Ovary (tissue), 10 donors: ENCODE measurements at regions of chr17 and their contacts with region 1.

Region 1: DNA sequence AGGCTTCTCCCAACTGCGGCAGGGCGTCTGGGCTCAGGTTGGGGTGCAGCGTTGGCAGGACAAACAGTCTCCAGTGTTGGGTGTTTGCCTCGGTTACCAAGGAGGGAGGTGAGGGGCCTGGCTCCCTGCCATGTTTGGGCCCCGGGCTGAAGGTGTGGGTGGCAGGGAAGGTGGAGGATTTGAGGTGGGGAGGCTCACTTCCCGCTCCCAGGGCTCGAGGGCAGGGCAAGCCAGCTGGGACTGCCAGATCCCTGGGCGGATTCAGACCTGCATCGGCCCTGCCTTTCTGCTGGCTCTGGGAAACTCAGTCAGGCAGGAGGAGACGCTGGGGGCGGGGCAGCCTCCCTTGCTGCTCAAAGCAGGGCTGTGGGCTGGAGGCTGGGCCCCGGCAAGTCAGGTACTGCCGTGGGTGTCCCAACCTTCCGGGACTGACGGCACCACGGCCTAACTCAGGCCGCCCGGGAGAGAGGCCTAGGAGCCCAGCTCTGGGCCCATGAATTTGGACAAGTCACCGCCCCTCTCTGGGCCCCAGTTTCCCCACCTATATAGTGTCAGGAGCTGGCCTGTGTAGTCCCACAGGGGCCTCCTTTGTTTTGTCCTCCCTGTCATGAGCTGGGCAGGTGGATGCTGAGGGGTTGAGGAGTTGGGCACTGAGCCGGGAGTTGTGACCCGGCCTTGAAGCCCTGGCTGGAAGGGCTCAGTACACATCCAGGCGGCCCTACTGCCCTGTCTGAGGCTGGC is 31.4 kb upstream of the KRT17 start:
- DNase-seq: peak in 1 of 5 donors; percentile 71
- H3K4me3 ChIP-seq: no peak overlapping the region
- H3K27ac ChIP-seq: no peak overlapping the region
- H3K4me1 ChIP-seq: no peaks in the 10 kb centered on the region
- H3K27me3 ChIP-seq: no peaks in the 10 kb centered on the region
- CTCF ChIP-seq: no peak
- EP300 ChIP-seq: no peak
- POLR2A ChIP-seq: no peak

Region 2: DNA sequence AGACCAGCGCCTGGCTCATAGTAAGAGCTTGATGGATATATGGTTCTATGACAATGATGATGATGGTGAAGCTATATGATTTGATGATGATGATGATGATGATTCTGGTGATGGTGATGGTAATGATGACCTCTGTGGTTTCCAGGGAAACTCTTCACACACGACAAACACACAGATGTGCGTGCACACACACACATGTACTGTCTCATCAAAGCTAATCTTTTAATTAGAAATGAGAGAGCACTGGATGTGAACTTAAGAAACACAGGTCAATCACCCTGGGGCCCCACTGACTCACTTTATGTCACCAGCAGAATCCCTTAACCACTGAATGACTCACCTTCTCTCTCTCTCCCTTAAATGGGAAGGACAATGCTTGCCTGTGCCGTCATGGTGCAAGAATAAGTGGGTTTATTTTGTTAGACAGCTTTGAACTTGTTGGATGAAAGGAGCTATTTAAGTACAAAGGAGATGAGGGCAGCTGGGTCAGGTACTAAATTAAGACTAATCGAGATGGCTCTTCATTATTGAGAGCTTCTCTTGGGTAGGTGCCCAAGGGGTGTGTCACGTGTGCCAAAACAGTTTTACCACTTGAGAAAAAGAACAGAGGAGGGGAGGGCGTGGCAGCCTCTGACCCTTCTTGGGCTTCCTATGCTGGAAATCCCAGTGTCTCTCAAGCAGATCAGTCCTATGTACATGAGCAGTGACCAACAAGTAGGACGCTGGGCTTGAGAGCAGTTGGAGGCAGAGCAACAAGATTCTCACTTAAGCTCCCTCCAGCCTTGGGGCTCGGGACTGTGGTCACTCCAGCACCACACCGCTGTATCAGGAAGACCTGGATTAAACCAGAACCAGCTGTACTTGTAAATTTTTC is 251.7 kb before region 1 on chr17:
- intact Hi-C with region 1: loop called in 1 of 4 experiments (anchors 10 kb)
- DNase-seq: no peak
- H3K4me3 ChIP-seq: no peak overlapping the region
- H3K27ac ChIP-seq: no peak overlapping the region
- H3K4me1 ChIP-seq: no peaks in the 10 kb centered on the region
- H3K27me3 ChIP-seq: no peaks in the 10 kb centered on the region
- CTCF ChIP-seq: no peak
- EP300 ChIP-seq: no peak
- POLR2A ChIP-seq: no peak